ENCODE measurements at regions of chr6 and their contacts with region 1.

Region 1: DNA sequence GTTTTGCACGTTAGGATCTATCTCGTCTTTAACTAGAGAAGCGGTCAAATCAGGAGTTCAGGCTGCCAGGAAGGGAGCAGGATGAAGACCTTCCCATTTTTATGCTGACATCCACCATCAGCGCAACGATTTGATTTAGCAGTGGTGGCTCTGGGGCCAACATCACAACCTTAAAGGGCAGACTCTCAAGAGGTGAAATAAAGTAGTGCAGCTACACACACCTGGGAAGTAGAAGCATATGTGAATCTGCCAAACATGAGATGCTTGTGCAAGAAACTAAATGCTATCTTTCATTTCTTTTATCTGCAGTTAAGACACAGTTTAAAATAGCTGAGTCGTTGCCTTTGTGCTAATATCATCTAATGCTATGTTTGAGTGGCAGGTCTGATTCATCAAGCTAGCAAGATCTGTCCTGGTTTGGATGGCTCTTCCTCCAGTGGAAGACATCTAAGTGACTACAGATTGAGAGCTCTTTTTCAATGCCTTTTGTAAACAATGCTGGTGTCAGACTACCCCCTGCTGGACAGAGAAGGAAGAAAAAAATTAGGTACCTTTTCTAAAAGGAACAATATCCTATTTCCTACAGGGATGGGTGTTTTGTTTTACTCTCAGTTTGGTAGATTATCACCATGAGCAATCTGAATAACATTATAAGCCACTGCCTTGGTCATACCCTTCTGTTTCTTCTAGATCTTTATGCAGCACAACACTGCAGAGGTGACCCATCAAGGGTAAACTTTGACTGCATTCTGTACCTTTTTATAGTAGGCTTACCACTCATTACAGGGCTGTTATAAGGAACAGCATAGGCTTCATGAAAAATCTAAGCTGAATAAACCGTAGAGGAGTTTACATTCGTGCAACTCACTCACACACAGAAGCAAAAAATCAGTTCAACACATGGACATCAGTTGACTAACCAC is 171.6 kb upstream of the FBXL4 start:
- DNase-seq: peak; percentile 42
- ATAC-seq: no peak
- H3K4me3 Mint-ChIP-seq: no peak overlapping the region
- H3K27ac Mint-ChIP-seq: no peak overlapping the region
- H3K4me1 Mint-ChIP-seq: no peaks in the 10 kb centered on the region
- H3K27me3 Mint-ChIP-seq: peaks cover 9% of the 10 kb centered on the region

Region 2: DNA sequence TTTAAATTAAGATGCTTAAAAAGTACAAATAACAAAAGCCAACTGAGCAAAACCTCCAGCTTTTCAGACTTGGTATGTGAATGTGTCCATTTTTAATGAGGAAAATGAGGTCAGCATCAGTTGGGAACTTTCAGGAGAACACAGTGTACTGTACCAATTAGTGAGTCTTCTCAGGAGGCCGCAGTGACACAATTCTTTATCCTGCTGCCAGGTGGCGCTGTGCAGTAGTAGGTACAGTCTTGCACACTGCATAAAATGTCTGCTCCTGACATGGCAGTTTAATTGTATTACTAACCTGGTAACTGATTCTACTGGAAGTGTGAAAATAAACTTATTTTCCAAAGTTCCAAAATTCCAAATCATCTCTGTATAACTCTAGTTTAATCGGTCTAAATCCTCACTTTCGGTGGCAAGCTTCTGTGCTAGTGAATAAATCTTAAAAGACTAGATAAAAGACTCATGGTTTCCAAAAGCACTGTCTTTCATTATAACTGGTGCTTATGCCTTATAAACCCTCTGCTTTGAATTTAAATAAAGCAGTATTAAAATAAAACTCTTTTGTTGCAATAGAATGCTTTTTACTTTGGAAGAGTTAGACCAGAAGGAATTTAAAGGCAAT is 1621.5 kb before region 1 on chr6:
- CTCF ChIA-PET with region 1: interaction called, 10 read pairs
- POLR2A ChIA-PET with region 1: no interaction called
- DNase-seq: peak; percentile 69
- ATAC-seq: peak; percentile 91
- H3K4me3 Mint-ChIP-seq: no peak overlapping the region
- H3K27ac Mint-ChIP-seq: no peak overlapping the region
- H3K4me1 Mint-ChIP-seq: no peaks in the 10 kb centered on the region
- H3K27me3 Mint-ChIP-seq: peaks cover 5% of the 10 kb centered on the region

Measured in activated CD8-positive, alpha-beta T cell treated with anti-CD3 and anti-CD28 coated beads, Interleukin-2, amount 10 ng/mL, durations not matched to agents 7 days and 5 days (primary cell).